Panc1 (cell line): ENCODE measurements at regions of chr20 and their contacts with region 1.

Region 1: DNA sequence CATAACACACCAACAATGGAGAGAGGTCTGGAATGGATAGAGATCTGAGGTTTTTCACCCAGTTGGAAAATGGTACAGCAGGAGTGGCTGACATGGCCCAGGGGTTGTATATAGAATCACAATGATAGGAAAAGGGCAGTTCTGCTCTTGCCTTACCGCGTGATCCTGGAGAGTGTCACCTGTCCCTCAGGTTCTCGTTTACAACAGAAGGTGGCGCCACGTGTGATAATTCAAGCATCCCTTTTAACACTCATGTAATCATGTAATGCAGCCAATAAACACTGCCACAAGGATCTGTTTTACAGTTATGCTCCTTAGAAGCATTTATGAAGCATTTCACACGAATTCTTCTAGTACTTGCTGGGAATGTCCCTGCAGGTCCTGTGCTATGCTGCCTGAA is 12.9 kb upstream of the WFDC2 start:
- DNase-seq: no peak
- ATAC-seq: peak; percentile 71; the same call in 1 of the 2 replicates
- H3K4me3 ChIP-seq: no peak overlapping the region
- H3K27ac ChIP-seq: no peak overlapping the region
- H3K4me1 ChIP-seq: no peaks in the 10 kb centered on the region
- H3K27me3 ChIP-seq: peaks cover 5% of the 10 kb centered on the region; the same call in 1 of the 2 replicates
- CTCF ChIP-seq: peak; percentile 61

Region 2: GRCh38 chr20:45487231-45487635 is 30.6 kb after region 1 on chr20:
- CTCF ChIA-PET with region 1: no interaction called
- POLR2A ChIA-PET with region 1: interaction called, 10 read pairs
- in situ Hi-C with region 1: no loop called
- intact Hi-C with region 1: no loop called
- DNase-seq: no peak
- ATAC-seq: no peak
- H3K4me3 ChIP-seq: no peak overlapping the region
- H3K27ac ChIP-seq: no peak overlapping the region
- H3K4me1 ChIP-seq: no peaks in the 10 kb centered on the region
- H3K27me3 ChIP-seq: peaks cover 5% of the 10 kb centered on the region
- CTCF ChIP-seq: no peak; the same call in none of the 2 replicates

Region 3: DNA sequence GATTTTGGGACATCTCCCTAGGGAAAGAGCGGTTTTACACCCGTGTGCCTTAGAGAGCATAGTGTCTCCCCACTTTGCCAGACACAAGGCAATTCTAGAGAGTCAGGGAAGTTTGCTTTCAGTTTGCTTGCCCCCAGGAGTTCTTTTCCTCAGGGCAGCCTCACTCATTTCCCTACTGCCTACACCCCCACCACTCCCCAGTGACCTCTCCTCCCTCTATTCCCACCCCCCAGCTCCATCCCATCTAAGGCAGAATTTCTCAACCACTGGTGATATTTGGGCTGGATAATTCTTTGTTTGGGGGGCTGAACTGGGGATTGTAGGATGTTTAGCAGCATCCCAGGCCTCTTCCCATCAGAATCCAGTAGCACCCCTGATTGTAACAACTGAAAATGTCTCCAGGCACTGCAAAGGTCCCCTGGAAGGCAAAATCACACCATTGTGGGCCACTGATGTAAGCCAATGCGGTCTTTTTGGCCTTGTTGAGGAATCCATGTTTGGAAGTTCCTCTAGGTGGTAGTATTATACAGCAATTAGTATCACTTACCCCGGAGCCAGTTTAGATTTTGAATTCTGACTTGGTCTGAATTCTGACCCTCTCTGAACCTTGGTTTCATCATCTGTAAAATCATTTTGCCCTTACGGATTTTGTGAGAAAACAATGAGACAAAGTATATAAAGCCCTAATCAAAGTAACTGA is 89.3 kb after region 1 on chr20:
- CTCF ChIA-PET with region 1: no interaction called
- POLR2A ChIA-PET with region 1: no interaction called
- in situ Hi-C with region 1: no loop called
- intact Hi-C with region 1: no loop called
- DNase-seq: no peak
- ATAC-seq: peak; percentile 88
- H3K4me3 ChIP-seq: no peak overlapping the region
- H3K27ac ChIP-seq: no peak overlapping the region
- H3K4me1 ChIP-seq: no peaks in the 10 kb centered on the region
- H3K27me3 ChIP-seq: peaks cover 11% of the 10 kb centered on the region; the same call in 1 of the 2 replicates
- CTCF ChIP-seq: peak; percentile 56